GM10248 (cell line): ENCODE measurements at regions of chr4 and their contacts with region 1.

Region 1: GRCh38 chr4:8176547-8177399 is 18.2 kb upstream of the ABLIM2 start:
- DNase-seq: peak; percentile 82
- CTCF ChIP-seq: peak; percentile 94

Region 2: GRCh38 chr4:8192748-8193738 is 16.3 kb after region 1 on chr4:
- CTCF ChIA-PET with region 1: interaction called, 83 read pairs
- POLR2A ChIA-PET with region 1: interaction called, 6 read pairs
- DNase-seq: peak; percentile 77
- CTCF ChIP-seq: peak; percentile 62

Region 3: DNA sequence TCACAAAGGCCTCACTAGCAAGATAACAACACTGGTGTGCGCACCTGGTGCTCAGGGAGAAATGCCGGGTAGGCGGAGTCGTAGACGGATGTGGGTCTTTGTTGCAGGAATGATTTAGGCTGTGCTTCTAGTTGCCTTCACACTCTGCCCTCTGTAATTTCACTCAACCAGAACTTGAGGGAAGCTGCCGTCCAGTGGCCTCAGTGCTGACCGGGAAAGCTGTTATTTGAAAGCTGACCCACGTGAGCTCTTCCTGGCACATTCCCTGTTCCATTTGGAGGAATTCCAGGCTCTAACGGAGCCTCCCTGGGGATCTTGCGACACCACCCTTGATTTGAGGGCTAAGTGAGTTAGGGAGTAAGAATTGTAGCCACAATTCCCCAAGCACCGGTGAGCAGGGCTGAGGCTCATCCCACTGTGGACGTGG is 38.2 kb after region 1 on chr4:
- CTCF ChIA-PET with region 1: interaction called, 12 read pairs
- POLR2A ChIA-PET with region 1: no interaction called
- DNase-seq: no peak
- CTCF ChIP-seq: no peak

Region 4: DNA sequence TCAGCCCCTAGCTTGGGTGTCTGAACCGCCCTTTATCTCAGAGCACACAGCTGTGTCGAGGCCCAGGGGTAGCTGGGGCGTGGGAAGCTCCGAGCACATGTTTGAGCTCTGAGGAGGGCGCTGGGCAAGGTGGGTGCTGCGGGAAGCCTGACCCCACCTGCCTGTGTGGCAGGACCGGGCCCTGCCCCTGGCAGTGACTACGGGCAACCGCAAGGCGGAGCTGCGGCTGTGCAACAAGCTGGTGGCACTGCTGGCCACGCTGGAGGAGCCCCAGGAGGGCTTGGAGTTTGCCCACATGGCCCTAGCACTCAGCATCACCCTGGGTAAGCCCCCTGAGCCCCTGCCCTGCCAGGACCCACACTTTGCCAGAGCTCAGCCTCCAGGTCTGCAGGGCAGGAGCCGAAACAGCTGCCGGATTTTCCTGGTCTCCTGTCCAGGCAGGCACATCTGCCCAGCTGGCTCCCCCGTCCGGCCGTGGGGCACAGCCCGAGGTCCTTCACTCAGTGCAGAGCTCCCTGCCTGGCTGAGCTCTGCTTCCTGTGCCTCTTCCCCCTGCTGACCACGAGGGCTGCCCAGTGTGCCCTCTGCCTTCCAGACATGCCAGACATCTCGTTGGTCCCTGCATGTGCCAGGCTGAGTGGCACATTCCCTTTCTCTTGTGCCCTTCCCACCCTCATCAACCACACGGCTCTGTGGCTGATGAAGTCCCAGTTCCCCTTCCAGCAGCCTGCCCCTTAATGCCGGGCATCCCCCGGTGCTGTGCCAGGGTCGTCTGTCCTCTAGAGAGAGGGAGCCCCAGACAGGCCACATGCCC is 59.5 kb after region 1 on chr4:
- CTCF ChIA-PET with region 1: interaction called, 12 read pairs
- POLR2A ChIA-PET with region 1: no interaction called
- DNase-seq: no peak
- CTCF ChIP-seq: no peak